Vagina (tissue), 2 donors: ENCODE measurements at regions of chr19 and their contacts with region 1.

Region 1: DNA sequence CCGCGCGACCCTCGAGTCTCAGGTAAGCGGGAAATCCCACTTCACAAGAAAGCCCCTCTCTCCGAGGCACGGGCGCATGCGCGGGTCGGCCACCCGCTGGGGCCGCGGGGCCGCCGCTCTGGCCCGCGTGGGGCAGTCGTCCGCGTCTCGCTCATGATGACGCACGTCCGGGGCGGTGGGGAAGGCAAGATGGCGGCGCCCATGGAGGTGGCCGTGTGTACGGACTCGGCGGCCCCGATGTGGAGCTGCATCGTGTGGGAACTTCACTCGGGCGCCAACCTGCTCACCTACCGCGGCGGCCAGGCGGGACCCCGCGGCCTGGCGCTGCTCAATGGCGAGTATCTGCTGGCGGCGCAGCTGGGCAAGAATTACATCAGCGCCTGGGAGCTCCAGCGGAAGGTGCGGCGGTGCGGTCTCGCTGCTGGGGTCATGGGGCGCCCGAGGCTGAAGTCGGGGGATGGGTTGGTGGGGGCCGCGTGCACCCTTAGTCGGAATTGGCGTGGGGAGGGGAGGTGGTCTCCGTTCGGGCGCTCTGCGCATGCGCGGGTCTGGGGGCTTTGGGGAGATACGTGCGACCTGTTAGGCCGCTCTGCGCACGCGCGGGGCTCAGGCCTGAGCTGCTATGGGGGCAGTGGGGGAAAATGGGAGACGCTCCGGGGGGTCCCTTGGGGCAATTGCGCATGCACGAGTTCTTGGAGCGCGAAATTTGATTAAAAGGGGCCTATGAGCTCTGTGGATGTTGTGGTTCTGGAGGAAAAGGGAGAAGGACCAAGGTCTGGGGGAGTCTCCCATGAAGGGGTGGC is at the start of gene WDR18:
- DNase-seq: no peak
- H3K4me3 ChIP-seq: peak within 1 kb of the TSS; percentile 77 to 99
- H3K27ac ChIP-seq: peak within 1 kb of the TSS; percentile 86
- H3K4me1 ChIP-seq: peaks cover 30% of the 10 kb centered on the region
- H3K27me3 ChIP-seq: no peaks in the 10 kb centered on the region
- CTCF ChIP-seq: peak in 1 of 3 experiments; percentile 45
- POLR2A ChIP-seq: peak in 1 of 2 donors; percentile 47
- total RNA-seq, gene WDR18: 66.8 TPM

Region 2: GRCh38 chr19:860481-861101 is 123.8 kb before region 1 on chr19:
- intact Hi-C with region 1: loop called (anchors 5 kb)
- DNase-seq: no peak
- H3K4me3 ChIP-seq: peak overlapping the region; percentile 53 to 59
- H3K27ac ChIP-seq: peak overlapping the region; percentile 92
- H3K4me1 ChIP-seq: peaks cover 48% of the 10 kb centered on the region
- H3K27me3 ChIP-seq: no peaks in the 10 kb centered on the region
- CTCF ChIP-seq: no peak
- POLR2A ChIP-seq: peak in 1 of 2 donors; percentile 7